Naive thymus-derived CD4-positive, alpha-beta T cell (primary cell): ENCODE measurements at regions of chr2 and their contacts with region 1.

Region 1: GRCh38 chr2:10620481-10620880 is 69.3 kb downstream of the NOL10 start:
- DNase-seq: peak in 6 of 9 donors; percentile 1 to 20 (median 12)
- ATAC-seq: peak; percentile 70
- H3K4me3 ChIP-seq: no peak overlapping the region
- H3K4me3 Mint-ChIP-seq: peak overlapping the region in 6 of 10 donors; percentile 17 to 73 (median 32)
- H3K27ac ChIP-seq: no peak overlapping the region
- H3K27ac Mint-ChIP-seq: peak overlapping the region in 1 of 9 donors; percentile 58
- H3K4me1 ChIP-seq: peaks cover 7 to 20% of the 10 kb centered on the region in 2 donors
- H3K4me1 Mint-ChIP-seq: peaks cover 24 to 51% (median 41%) of the 10 kb centered on the region in 7 donors
- H3K27me3 ChIP-seq: no peaks in the 10 kb centered on the region
- H3K27me3 Mint-ChIP-seq: no peaks in the 10 kb centered on the region

Region 2: GRCh38 chr2:10654069-10654468 is 33.6 kb after region 1 on chr2:
- CTCF ChIA-PET with region 1: no interaction called
- POLR2A ChIA-PET with region 1: no interaction called
- intact Hi-C with region 1: loop called in 1 of 2 experiments (anchors 2 kb)
- DNase-seq: peak in 1 of 9 donors; percentile 39
- ATAC-seq: peak; percentile 54
- H3K4me3 ChIP-seq: no peak overlapping the region
- H3K4me3 Mint-ChIP-seq: peak overlapping the region in 1 of 10 donors; percentile 3
- H3K27ac ChIP-seq: no peak overlapping the region
- H3K27ac Mint-ChIP-seq: peak overlapping the region in 4 of 9 donors; percentile 19 to 67 (median 33)
- H3K4me1 ChIP-seq: peaks cover 0 to 5% of the 10 kb centered on the region in 2 donors
- H3K4me1 Mint-ChIP-seq: peaks cover 5 to 47% (median 13%) of the 10 kb centered on the region in 7 donors
- H3K27me3 ChIP-seq: no peaks in the 10 kb centered on the region
- H3K27me3 Mint-ChIP-seq: no peaks in the 10 kb centered on the region

Region 3: GRCh38 chr2:10792001-10792634 is 171.6 kb after region 1 on chr2:
- CTCF ChIA-PET with region 1: no interaction called
- POLR2A ChIA-PET with region 1: no interaction called
- intact Hi-C with region 1: no loop called
- DNase-seq: no peak
- ATAC-seq: no peak
- H3K4me3 ChIP-seq: no peak overlapping the region
- H3K4me3 Mint-ChIP-seq: no peak overlapping the region
- H3K27ac ChIP-seq: no peak overlapping the region
- H3K27ac Mint-ChIP-seq: peak overlapping the region in 4 of 9 donors; percentile 22 to 58 (median 42)
- H3K4me1 ChIP-seq: peaks cover 0 to 6% of the 10 kb centered on the region in 2 donors
- H3K4me1 Mint-ChIP-seq: peaks cover 0 to 24% (median 0%) of the 10 kb centered on the region in 7 donors
- H3K27me3 ChIP-seq: no peaks in the 10 kb centered on the region
- H3K27me3 Mint-ChIP-seq: no peaks in the 10 kb centered on the region

Region 4: GRCh38 chr2:10873790-10874437 is 253.4 kb after region 1 on chr2:
- CTCF ChIA-PET with region 1: no interaction called
- POLR2A ChIA-PET with region 1: no interaction called
- intact Hi-C with region 1: no loop called
- DNase-seq: no peak
- ATAC-seq: no peak
- H3K4me3 ChIP-seq: no peak overlapping the region
- H3K4me3 Mint-ChIP-seq: no peak overlapping the region
- H3K27ac ChIP-seq: no peak overlapping the region
- H3K27ac Mint-ChIP-seq: no peak overlapping the region
- H3K4me1 ChIP-seq: no peaks in the 10 kb centered on the region
- H3K4me1 Mint-ChIP-seq: peaks cover 0 to 9% (median 0%) of the 10 kb centered on the region in 7 donors
- H3K27me3 ChIP-seq: peaks cover 0 to 6% of the 10 kb centered on the region in 2 donors
- H3K27me3 Mint-ChIP-seq: peaks cover 0 to 16% (median 10%) of the 10 kb centered on the region in 5 donors